Gastrocnemius medialis (tissue), 4 donors: ENCODE measurements at regions of chr17 and their contacts with region 1.

Region 1: DNA sequence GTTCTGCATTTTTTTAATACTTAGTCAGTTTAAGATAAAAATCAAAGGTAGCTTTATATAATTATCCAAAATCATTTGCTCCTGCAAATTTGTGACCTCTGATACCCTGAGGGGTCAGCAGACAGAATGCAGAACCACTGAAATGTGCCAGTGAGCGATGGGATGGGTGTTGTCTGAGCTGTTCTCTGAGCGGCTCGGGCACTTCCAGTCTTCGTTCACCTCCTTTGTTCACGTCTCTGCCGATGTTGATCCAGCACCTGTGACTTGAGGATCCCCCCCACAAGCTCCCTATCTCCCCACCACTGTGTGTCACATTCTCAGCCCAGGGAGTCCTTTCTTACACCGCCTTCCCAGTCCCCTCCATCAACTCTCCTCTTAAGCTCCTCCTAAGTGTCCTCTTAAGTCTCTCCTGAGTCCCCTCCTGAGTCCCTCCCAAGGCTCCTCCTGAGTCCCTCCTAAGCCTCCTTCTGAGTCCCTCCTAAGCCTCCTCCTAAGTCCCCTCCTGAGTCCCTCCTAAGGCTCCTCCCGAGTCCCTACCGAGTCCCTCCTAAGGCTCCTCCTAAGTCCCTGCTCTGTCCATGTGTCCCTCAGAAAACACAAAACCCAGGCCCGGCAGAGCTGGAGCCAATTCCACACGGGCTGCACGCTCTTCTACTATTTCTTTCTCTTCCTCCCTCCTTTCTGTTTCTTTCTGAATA is 47.5 kb downstream of the RNF213 start:
- DNase-seq: no peak
- ATAC-seq: no peak
- H3K4me3 ChIP-seq: no peak overlapping the region
- H3K27ac ChIP-seq: no peak overlapping the region
- H3K4me1 ChIP-seq: no peaks in the 10 kb centered on the region
- H3K27me3 ChIP-seq: no peaks in the 10 kb centered on the region
- CTCF ChIP-seq: no peak
- POLR2A ChIP-seq: no peak

Region 2: DNA sequence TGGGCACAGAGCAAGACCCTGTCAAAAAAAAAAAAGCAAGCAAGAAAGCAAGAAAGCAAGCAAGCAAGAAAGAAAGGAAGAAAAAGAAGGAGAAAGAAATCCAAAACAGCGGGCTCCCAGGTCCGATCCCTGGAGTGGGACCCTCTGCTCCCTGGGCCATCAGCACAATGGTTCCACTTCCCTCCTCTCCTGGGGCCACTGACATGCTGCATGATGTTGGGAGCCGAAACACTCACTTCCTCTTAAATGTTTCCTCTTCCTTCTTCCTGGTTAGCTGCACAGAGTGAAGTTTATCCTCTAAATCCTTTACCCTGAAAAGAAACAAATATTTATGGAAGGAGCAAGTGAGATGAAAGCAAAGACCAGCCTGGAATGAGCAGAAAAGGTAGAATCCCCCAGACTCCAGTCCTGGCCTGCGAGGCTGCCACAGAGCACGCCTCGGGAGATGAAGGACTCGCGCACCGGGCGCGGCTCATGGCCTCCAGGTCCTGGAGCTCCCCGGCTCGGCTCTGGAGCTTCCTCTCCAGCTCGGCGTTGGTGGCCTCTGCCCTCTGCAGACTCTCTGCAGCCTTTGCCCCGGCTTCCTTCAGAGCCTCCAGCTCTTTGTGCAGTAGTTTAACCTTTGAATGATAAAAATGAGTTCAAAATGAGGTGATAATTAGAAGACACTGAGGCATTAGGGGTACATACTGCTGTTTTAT is 1885.5 kb after region 1 on chr17:
- in situ Hi-C with region 1: no loop called
- intact Hi-C with region 1: loop called (anchors 10 kb)
- DNase-seq: no peak
- ATAC-seq: no peak
- H3K4me3 ChIP-seq: no peak overlapping the region
- H3K27ac ChIP-seq: no peak overlapping the region
- H3K4me1 ChIP-seq: no peaks in the 10 kb centered on the region
- H3K27me3 ChIP-seq: no peaks in the 10 kb centered on the region
- CTCF ChIP-seq: no peak
- POLR2A ChIP-seq: no peak